ENCODE measurements at regions of chr15 and their contacts with region 1.

Region 1: DNA sequence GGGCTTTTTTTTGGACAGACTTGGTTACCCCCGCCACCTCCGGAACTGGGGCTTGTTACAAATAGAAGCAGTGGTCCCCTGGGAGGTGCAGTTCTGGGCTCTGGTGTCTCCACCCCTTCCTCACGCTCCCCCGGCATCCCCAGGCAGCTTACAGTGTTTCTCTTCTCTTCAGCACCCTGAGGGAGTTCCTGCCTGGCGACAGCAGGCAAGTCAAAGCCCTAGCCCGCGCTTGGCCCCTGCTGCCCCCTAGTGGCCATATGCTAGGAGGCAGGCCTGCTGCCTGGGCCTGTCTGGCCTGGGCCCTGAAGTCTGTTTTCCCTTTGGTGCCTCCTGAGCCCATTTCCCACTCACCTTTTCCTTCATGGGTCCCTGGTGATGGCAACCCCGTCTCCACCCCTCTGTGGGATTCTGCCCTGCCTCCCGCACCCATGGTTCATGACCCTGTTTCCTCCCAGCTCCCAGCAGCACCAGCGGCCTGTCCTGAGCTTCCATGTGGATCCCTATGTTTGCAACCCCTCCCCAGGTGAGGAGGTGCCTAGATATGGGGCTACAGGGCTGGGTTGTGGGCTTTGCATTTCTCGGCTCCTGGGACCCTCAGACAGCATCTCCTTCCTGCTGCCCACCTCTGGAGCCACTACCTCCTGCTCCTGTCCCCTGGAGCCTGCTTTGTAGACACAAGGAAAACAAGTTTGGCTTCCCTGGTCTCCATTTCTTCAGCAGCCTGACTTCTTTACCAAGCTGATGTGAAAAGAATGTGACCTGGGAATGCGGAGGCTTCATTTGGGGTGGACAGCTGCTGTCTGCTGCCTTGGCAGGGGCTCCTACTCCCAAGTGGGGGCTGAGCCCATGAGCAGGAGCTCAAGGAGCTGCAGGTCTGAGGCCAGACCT is 2.2 kb downstream of the SNX22 start:
- DNase-seq: peak; percentile 97
- H3K4me3 ChIP-seq: peak overlapping the region; percentile 66
- H3K27ac ChIP-seq: peak overlapping the region; percentile 53
- H3K4me1 ChIP-seq: peaks cover 17% of the 10 kb centered on the region
- H3K27me3 ChIP-seq: no peaks in the 10 kb centered on the region
- CTCF ChIP-seq: peak; percentile 99

Region 2: DNA sequence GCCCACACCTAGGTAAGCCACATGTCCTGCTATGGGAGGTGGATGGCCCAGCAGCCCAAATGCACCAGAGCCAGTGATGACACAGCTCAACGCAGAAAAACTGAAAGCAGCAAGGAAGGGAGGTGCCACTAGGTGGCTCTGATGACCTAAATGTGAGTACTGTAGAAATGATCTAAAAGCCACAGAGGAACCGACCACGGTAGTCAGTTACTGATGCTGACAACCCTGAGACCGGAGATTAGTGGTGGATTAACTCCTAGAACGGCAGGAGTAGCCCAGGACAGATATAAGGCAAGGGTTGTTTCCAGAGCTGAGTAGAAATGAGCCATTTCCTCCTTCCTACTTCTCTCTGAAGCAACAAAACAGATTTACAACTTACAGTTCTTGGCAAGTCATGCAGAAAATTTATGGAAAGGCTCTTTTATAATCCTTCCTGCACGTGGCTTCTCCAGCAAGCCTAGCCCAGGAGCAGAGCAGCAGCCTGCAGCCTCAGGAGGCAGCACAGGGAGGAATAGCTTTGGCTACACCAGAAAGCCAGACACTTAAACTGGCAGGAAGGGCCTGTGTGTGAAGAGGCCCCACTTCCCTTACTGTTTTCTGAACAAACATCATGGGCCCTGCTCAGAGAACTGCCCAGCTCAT is 543.4 kb before region 1 on chr15:
- CTCF ChIA-PET with region 1: interaction called, 12 read pairs
- POLR2A ChIA-PET with region 1: interaction called, 14 read pairs
- intact Hi-C with region 1: no loop called
- DNase-seq: peak; percentile 98
- H3K4me3 ChIP-seq: no peak overlapping the region
- H3K27ac ChIP-seq: peak overlapping the region; percentile 91
- H3K4me1 ChIP-seq: peaks cover 26% of the 10 kb centered on the region
- H3K27me3 ChIP-seq: no peaks in the 10 kb centered on the region
- CTCF ChIP-seq: peak; percentile 90

Region 3: GRCh38 chr15:64093627-64094417 is 59.9 kb before region 1 on chr15 and contains the start of gene CIAO2A:
- CTCF ChIA-PET with region 1: no interaction called
- POLR2A ChIA-PET with region 1: interaction called, 9 read pairs
- intact Hi-C with region 1: loop called (anchors 2 kb)
- DNase-seq: peak; percentile 99
- H3K4me3 ChIP-seq: peak within 1 kb of the TSS; percentile 71
- H3K27ac ChIP-seq: peak within 1 kb of the TSS; percentile 82
- H3K4me1 ChIP-seq: peaks cover 43% of the 10 kb centered on the region
- H3K27me3 ChIP-seq: no peaks in the 10 kb centered on the region
- CTCF ChIP-seq: no peak
- total RNA-seq, gene CIAO2A: 75.3 and 75.6 TPM in 2 replicates